K562 (cell line): ENCODE measurements at regions of chr6 and their contacts with region 1.

Region 1: DNA sequence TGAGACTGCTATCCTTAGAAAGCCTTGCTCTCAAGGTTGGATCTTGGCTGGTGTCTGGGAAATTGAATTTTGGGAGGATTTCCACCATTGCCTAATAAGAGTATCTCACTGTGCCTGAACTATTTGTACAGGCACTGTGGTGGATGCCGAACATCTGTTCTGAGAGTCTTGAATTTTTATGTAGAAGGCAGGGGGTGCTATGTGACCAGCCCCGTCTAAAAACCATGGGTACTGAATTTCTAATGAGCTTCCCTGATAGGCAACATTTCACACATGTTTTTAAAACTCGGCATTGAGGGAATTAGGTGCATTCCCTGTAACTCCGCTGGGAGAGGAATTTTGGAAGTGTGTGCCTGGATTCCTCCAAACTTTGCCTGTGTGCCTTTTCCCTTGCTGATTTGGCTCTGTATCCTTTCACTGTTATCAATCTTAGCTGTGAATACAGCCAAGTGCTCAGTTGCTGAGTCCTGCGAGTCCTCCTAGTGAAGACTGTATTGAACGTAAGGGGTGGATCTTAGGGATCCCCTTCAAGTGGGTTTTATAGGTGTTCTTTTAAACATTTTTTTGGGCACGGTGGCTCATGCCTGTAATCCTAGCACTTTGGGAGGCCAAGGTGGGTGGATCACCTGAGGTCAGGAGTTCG is 27.6 kb upstream of the SCAF8 start:
- DNase-seq: peak in 1 of 4 experiments; percentile 30
- ATAC-seq: peak; percentile 70
- H3K4me3 ChIP-seq: no peak overlapping the region
- H3K27ac ChIP-seq: no peak overlapping the region
- H3K4me1 ChIP-seq: no peaks in the 10 kb centered on the region; a peak in 2 of 5 replicates
- H3K27me3 ChIP-seq: peaks cover 8 to 10% of the 10 kb centered on the region in 2 experiments; a peak in 2 of 5 replicates
- CTCF ChIP-seq: peak; percentile 32 to 57 (median 48); a peak in 5 of 6 replicates
- EP300 ChIP-seq: no peak
- POLR2A ChIP-seq: no peak
- RAD21 ChIP-seq: peak; percentile 16 to 57; a peak in 3 of 4 replicates

Region 2: GRCh38 chr6:154805288-154805911 is 99.8 kb after region 1 on chr6:
- CTCF ChIA-PET with region 1: interaction called, 3 read pairs
- POLR2A ChIA-PET with region 1: no interaction called
- in situ Hi-C with region 1: no loop called
- intact Hi-C with region 1: loop called (anchors 1 kb)
- DNase-seq: peak; percentile 28 to 42 (median 34)
- ATAC-seq: peak; percentile 69; the same call in 2 of the 3 replicates
- H3K4me3 ChIP-seq: no peak overlapping the region
- H3K27ac ChIP-seq: no peak overlapping the region
- H3K4me1 ChIP-seq: no peaks in the 10 kb centered on the region
- H3K27me3 ChIP-seq: no peaks in the 10 kb centered on the region
- CTCF ChIP-seq: peak in 2 of 3 experiments; percentile 41 to 74; a peak in 3 of 6 replicates
- EP300 ChIP-seq: no peak
- POLR2A ChIP-seq: no peak
- RAD21 ChIP-seq: peak; percentile 61 to 63